IMR-90 (cell line): ENCODE measurements at regions of chr14 and their contacts with region 1.

Region 1: DNA sequence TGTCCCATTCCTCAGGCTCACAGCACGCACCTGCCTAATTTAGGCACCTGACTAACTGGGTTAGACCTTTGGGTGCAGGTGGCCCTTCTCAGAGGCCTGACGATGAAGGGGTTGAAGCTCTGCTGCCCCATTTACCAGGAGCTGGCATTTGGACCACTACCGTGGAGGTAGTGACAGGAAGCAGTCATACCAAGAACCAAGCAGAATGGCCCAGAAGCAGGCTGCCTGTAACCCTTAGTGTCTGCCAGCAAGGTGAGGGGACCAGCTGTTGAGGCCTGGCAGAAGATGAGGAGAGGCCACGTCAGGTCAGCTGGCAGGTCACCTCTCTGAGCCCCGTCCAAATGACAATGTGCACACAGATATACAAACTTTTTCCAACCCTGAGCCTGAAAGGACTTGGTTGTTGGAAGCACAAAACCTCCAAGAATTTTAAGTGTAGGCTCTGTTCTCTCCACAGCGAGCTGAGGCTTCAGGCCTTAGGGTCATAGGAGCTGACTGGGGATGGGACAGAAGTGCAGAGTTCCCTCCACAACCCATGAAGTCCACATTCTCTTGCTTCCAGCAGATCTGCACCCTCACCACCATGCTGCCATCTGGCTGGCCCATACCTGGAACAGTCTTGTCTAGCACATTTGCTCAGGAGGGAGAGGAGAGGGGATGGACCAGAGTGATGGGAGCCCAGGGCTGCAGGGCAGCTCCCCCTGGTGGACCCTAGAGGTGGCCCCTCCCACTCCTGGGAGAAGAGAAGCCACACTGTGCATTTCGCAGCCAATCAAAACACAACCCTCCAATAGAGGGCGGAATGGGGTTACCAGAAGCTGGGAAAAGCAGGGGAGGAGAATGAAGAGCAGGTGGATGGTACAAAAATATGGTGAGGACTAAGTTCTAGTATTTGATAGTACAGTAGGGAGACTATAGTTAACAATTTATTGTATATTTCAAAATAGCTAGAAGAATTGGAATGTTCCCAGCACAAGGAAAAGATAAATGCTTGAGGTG is 23.3 kb downstream of the VASH1 start:
- DNase-seq: peak; percentile 75
- ATAC-seq: peak; percentile 96
- H3K4me3 ChIP-seq: no peak overlapping the region
- H3K27ac ChIP-seq: no peak overlapping the region
- H3K4me1 ChIP-seq: peaks cover 4% of the 10 kb centered on the region; the same call in 1 of the 2 replicates
- H3K27me3 ChIP-seq: no peaks in the 10 kb centered on the region
- CTCF ChIP-seq: peak; percentile 96
- POLR2A ChIP-seq: no peak
- RAD21 ChIP-seq: peak; percentile 84

Region 2: DNA sequence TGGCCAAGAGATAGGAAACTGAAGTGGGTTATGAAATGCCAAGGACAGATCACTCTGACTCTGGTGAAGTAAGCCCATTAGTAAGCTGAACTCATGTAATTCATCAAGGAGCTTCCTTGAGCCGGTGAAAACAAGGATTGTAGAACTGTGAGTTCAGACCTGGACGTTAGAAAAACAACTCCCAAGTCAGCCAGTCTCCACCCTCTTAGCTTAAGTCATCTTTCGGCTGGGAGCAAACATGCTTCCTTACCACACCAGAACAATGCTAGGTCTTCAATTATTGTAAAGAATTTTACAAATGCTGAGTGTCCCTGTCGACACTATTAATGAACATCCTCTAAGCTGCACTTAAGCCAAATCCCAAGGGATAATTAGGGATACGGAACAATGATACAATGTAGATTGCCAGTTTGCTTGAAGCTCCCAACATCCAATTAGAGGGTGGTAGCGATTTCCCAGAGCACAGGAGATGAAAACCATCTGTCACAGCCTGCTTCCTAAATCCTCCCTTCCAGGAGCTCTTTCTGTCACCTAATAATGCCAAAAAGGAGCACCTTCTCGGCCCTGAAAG is 69.0 kb before region 1 on chr14:
- CTCF ChIA-PET with region 1: interaction called, 17 read pairs
- POLR2A ChIA-PET with region 1: no interaction called
- dilution Hi-C with region 1: no loop called
- in situ Hi-C with region 1: loop called (anchors 5 kb)
- intact Hi-C with region 1: loop called (anchors 1 kb)
- DNase-seq: no peak
- ATAC-seq: no peak
- H3K4me3 ChIP-seq: no peak overlapping the region
- H3K27ac ChIP-seq: no peak overlapping the region
- H3K4me1 ChIP-seq: no peaks in the 10 kb centered on the region
- H3K27me3 ChIP-seq: peaks cover 8% of the 10 kb centered on the region
- CTCF ChIP-seq: no peak
- POLR2A ChIP-seq: no peak
- RAD21 ChIP-seq: no peak